Activated B cell treated with CpG ODN at 0.5 μM for 24 hours (primary cell): ENCODE measurements at regions of chr3 and their contacts with region 1.

Region 1: GRCh38 chr3:12841149-12841970 is at the start of gene RPL32:
- DNase-seq: peak; percentile 78
- ATAC-seq: peak; percentile 92
- H3K4me3 Mint-ChIP-seq: peak within 1 kb of the TSS; percentile 96
- H3K27ac Mint-ChIP-seq: peak within 1 kb of the TSS; percentile 100
- H3K4me1 Mint-ChIP-seq: peaks cover 48% of the 10 kb centered on the region
- H3K27me3 Mint-ChIP-seq: no peaks in the 10 kb centered on the region
- CTCF ChIP-seq: no peak
- total RNA-seq, gene RPL32: 2,996 and 3,448 TPM in 2 replicates

Region 2: GRCh38 chr3:12556671-12557472 is 284.5 kb before region 1 on chr3 and contains the start of gene MKRN2:
- CTCF ChIA-PET with region 1: no interaction called
- POLR2A ChIA-PET with region 1: interaction called, 4 read pairs
- intact Hi-C with region 1: loop called (anchors 5 kb)
- DNase-seq: peak; percentile 85
- ATAC-seq: peak; percentile 96
- H3K4me3 Mint-ChIP-seq: peak within 1 kb of the TSS; percentile 89
- H3K27ac Mint-ChIP-seq: peak within 1 kb of the TSS; percentile 62
- H3K4me1 Mint-ChIP-seq: peaks cover 62% of the 10 kb centered on the region
- H3K27me3 Mint-ChIP-seq: peaks cover 9% of the 10 kb centered on the region
- CTCF ChIP-seq: no peak
- total RNA-seq, gene MKRN2: 22.2 and 22.3 TPM in 2 replicates

Region 3: GRCh38 chr3:12706504-12707253 is 134.7 kb before region 1 on chr3:
- CTCF ChIA-PET with region 1: interaction called, 8 read pairs
- POLR2A ChIA-PET with region 1: no interaction called
- intact Hi-C with region 1: loop called (anchors 1 kb)
- DNase-seq: peak; percentile 24
- ATAC-seq: peak; percentile 98
- H3K4me3 Mint-ChIP-seq: no peak overlapping the region
- H3K27ac Mint-ChIP-seq: no peak overlapping the region
- H3K4me1 Mint-ChIP-seq: no peaks in the 10 kb centered on the region
- H3K27me3 Mint-ChIP-seq: peaks cover 3% of the 10 kb centered on the region
- CTCF ChIP-seq: no peak

Region 4: DNA sequence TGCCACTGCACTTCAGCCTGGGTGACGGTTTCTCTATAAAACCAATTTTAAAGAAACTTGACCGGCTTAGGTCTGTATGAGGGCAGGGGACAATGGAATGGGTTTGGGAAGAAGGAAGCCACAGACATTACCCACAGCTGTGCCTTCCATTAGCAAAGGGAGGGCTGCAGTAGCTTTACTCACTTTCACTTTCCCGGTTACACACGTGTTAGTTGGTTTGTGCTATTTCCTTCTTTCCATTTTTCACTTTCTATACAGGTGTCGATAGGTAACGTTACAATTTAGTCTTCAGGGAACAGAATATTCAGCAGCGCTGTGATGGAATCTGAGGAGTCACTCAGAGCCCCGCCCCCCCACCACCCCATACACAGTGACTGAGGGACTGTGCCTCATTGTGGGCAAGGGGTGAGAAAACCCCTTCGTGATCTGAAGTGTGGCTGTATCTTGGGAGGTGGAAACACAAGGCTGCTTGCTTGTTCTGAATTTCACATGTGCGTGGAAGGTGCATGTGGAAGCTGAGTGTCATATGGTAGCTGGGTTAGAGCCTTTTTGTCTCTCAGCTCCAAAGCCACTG is 44.8 kb after region 1 on chr3:
- CTCF ChIA-PET with region 1: interaction called, 18 read pairs
- POLR2A ChIA-PET with region 1: interaction called, 13 read pairs
- intact Hi-C with region 1: no loop called
- DNase-seq: no peak
- ATAC-seq: peak; percentile 38
- H3K4me3 Mint-ChIP-seq: peak overlapping the region; percentile 75
- H3K27ac Mint-ChIP-seq: peak overlapping the region; percentile 32
- H3K4me1 Mint-ChIP-seq: peaks cover 47% of the 10 kb centered on the region
- H3K27me3 Mint-ChIP-seq: peaks cover 3% of the 10 kb centered on the region
- CTCF ChIP-seq: no peak

Region 5: DNA sequence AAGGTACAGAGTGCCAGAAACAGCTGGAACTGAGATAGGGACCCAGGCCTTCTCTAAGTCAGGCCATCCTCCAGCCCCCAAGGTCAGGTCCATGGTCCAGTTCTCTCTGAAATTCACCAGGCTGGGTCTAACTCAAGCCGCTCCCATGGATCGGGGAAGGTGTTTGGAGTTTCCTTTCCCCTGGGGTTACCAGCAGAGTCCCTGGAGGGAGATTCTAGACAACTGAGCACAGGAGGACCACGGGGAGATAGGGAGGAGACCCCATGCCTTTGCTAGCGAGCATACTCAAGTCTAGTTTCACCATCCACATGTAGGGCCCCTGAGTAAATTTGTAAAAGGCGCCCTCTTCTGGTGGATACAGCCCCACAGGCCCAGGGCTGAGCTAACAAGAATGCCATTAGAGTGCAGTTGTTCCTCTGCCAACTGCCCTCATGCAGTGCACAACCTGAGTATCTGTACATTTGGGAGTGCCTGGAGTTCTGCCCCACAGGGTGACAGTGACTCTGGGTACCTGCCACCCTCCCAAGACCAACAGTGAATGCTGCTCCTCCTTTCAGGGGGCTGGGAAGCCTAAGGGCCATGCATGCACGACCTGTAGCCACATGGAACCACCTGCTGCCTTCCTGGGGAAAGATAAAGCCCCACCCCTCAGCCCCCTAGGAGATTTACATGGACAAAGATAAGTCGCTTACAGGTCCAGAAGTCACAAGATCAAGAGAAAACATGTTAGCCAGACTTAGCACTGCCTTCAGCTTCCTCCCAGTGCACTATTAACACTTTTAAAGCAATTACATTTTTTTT is 142.9 kb after region 1 on chr3:
- CTCF ChIA-PET with region 1: no interaction called
- POLR2A ChIA-PET with region 1: no interaction called
- intact Hi-C with region 1: no loop called
- DNase-seq: no peak
- ATAC-seq: peak; percentile 51
- H3K4me3 Mint-ChIP-seq: peak overlapping the region; percentile 35
- H3K27ac Mint-ChIP-seq: peak overlapping the region; percentile 56
- H3K4me1 Mint-ChIP-seq: peaks cover 90% of the 10 kb centered on the region
- H3K27me3 Mint-ChIP-seq: no peaks in the 10 kb centered on the region
- CTCF ChIP-seq: no peak

Region 6: DNA sequence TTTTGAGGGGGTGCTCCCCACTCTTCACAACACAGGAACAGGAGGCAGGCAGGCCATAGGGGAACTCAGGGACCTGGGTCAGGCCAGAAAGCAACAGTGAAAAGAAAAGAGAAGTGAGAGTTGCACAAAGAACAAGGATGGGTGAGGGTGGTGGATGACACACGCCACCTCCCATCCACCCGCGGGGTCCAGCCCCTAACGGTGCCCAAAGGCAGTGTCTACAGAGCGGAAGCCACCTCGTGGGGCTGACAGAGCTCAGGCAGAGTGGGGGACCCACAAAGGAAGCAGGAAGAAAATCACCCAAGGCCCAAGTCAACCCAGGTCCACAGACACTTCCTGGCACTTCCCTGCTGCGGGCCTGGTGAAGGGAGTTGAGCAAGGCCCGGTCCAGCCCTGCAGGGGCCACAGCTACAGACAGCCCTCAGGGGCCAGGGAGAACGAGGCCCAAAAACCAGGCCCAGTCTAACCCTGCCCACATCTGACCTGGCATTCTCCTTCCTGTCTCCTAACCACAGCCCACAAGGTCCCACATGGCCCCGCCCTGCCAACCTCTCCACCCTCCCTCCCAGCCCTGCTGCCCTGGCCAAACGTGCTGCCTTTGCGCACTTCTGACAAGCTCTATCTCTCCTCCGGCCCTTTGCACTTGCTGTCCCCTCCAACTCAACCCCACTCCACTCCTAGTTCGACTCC is 572.8 kb after region 1 on chr3:
- CTCF ChIA-PET with region 1: no interaction called
- POLR2A ChIA-PET with region 1: no interaction called
- intact Hi-C with region 1: loop called (anchors 2 kb)
- DNase-seq: peak; percentile 76
- ATAC-seq: peak; percentile 93
- H3K4me3 Mint-ChIP-seq: peak overlapping the region; percentile 79
- H3K27ac Mint-ChIP-seq: peak overlapping the region; percentile 98
- H3K4me1 Mint-ChIP-seq: peaks cover 67% of the 10 kb centered on the region
- H3K27me3 Mint-ChIP-seq: no peaks in the 10 kb centered on the region
- CTCF ChIP-seq: no peak